Activated naive CD4-positive, alpha-beta T cell treated with anti-CD3 and anti-CD28 coated beads for 36 hours (primary cell): ENCODE measurements at regions of chr5 and their contacts with region 1.

Region 1: GRCh38 chr5:74919487-74919886 is 53.3 kb upstream of the FAM169A start:
- DNase-seq: no peak
- H3K4me3 Mint-ChIP-seq: no peak overlapping the region
- H3K27ac Mint-ChIP-seq: no peak overlapping the region
- H3K4me1 Mint-ChIP-seq: no peaks in the 10 kb centered on the region
- H3K27me3 Mint-ChIP-seq: peaks cover 2% of the 10 kb centered on the region

Region 2: GRCh38 chr5:73902327-73903051 is 1017.0 kb before region 1 on chr5:
- CTCF ChIA-PET with region 1: interaction called, 3 read pairs
- intact Hi-C with region 1: loop called (anchors 5 kb)
- DNase-seq: peak; percentile 9
- H3K4me3 Mint-ChIP-seq: no peak overlapping the region
- H3K27ac Mint-ChIP-seq: no peak overlapping the region
- H3K4me1 Mint-ChIP-seq: peaks cover 3% of the 10 kb centered on the region
- H3K27me3 Mint-ChIP-seq: peaks cover 23% of the 10 kb centered on the region

Region 3: DNA sequence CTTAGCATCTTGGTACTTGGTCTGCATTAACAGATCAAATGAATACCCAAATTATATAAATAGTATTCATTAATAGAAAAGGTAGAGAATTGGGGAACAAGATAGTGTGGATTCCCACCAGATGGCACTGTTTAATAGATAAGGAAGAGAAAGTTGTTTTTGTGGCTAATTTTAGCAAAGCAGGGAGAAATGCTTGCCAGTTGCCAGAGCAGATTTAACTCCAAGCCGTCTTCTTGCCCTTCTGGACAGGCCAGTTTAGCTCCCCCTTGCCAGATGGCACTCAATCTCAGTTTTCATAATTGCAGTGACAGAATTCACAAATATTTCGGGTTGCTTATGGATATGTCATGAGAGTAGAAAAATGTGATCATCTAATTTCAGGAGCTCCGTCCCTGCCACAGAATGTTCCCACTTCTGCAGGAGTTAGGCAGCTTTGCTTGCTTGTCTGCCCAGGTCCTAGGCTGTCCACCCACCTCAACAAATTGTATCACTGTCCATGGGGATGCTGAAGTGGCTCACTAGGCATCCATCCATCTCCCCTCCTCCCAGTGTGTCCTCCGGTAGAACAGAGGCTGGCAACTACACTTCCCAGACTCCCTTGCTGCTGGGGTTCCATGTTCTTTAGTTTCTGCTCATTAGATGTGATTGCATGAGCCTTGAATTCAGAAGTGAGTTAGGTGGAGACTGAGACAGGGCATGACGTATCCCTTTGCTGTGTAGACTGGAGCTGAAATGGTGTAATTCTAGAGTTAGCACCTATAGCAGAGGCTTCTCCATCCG is 246.3 kb before region 1 on chr5:
- CTCF ChIA-PET with region 1: interaction called, 9 read pairs
- intact Hi-C with region 1: loop called (anchors 1 kb)
- DNase-seq: no peak
- H3K4me3 Mint-ChIP-seq: no peak overlapping the region
- H3K27ac Mint-ChIP-seq: no peak overlapping the region
- H3K4me1 Mint-ChIP-seq: no peaks in the 10 kb centered on the region
- H3K27me3 Mint-ChIP-seq: no peaks in the 10 kb centered on the region

Region 4: GRCh38 chr5:74717596-74717995 is 201.9 kb before region 1 on chr5:
- CTCF ChIA-PET with region 1: no interaction called
- intact Hi-C with region 1: loop called (anchors 2 kb)
- DNase-seq: no peak
- H3K4me3 Mint-ChIP-seq: no peak overlapping the region
- H3K27ac Mint-ChIP-seq: no peak overlapping the region
- H3K4me1 Mint-ChIP-seq: no peaks in the 10 kb centered on the region
- H3K27me3 Mint-ChIP-seq: no peaks in the 10 kb centered on the region